BJ (cell line): ENCODE measurements at regions of chr2 and their contacts with region 1.

Region 1: GRCh38 chr2:200509612-200510433 is at the start of gene KCTD18:
- DNase-seq: peak; percentile 26
- H3K4me3 ChIP-seq: peak within 1 kb of the TSS; percentile 77
- H3K27me3 ChIP-seq: peaks cover 10% of the 10 kb centered on the region
- CTCF ChIP-seq: peak; percentile 55
- polyA plus RNA-seq, gene KCTD18: 9.3 and 11.3 TPM in 2 replicates

Region 2: DNA sequence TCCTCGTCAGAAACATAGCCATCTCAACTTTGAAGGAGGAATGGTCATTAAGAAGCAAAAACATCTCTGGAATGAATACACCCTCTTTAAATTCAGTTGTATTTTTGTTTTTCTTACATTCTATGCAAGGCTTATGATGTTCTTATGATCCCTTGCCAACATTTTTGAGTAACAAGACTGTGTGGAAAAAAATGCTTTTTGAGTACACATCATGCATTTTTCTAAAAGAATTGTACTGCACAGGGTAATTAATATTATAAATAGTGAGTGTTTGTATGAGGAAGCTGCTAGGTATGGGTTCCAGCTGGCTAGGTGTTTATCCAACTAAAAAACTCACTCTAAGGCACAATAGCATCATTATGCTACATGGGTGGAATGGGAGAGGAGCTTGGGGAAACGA is 262.3 kb before region 1 on chr2:
- CTCF ChIA-PET with region 1: no interaction called
- POLR2A ChIA-PET with region 1: interaction called, 10 read pairs
- DNase-seq: peak; percentile 68
- H3K4me3 ChIP-seq: no peak overlapping the region
- H3K27me3 ChIP-seq: no peaks in the 10 kb centered on the region
- CTCF ChIP-seq: no peak

Region 3: DNA sequence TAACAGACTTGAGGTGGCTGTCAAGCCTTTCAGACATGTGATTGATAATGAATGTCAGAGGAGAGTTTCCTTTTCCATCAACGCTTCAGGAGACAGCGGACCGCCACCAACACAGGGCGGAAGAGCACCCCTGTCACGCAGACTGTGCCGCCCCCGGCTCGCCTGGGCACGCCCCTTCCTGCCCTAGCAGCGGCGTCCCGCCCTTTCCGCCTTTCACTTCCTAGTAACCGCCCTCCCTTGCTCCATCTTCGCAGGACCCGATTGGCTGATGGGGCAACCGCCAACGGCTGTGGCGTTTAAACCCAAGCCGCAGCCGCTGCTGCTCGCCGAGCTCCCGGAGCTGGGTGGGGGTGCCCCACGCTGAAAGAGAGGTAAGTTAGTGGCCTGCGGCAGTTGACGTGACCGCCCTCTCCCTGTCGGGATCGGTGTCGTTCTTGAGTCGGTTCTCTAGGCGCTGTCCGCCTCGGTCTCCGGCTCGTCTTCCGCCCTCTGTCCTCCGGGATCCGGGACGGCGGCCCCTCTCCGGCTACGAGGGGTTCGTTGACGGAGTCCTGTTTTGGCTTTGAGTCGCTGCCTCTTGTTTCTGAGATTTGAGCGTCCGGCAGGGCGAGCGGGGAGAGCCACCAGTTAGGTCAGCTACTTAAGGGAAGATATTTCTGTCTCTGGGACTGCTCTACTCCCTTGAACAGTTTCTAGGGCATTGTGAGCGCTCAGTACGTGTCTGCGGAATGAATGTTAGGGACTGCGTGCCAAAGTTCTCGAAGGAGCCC is 16.2 kb after region 1 on chr2 and contains the start of gene SGO2:
- CTCF ChIA-PET with region 1: interaction called, 29 read pairs
- POLR2A ChIA-PET with region 1: no interaction called
- DNase-seq: peak; percentile 69
- H3K4me3 ChIP-seq: peak within 1 kb of the TSS; percentile 85
- H3K27me3 ChIP-seq: peaks cover 6% of the 10 kb centered on the region
- CTCF ChIP-seq: peak; percentile 26; the same call in 1 of the 2 replicates
- polyA plus RNA-seq, gene SGO2: 3.2 and 7.3 TPM in 2 replicates